Naive thymus-derived CD4-positive, alpha-beta T cell (primary cell): ENCODE measurements at regions of chr10 and their contacts with region 1.

Region 1: GRCh38 chr10:61992671-61993668 is 91.5 kb downstream of the ARID5B start:
- DNase-seq: peak in 8 of 9 donors; percentile 39 to 85 (median 72)
- ATAC-seq: peak; percentile 90
- H3K4me3 ChIP-seq: peak overlapping the region; percentile 28
- H3K4me3 Mint-ChIP-seq: peak overlapping the region in 9 of 10 donors; percentile 61 to 89 (median 64)
- H3K27ac ChIP-seq: peak overlapping the region; percentile 63
- H3K27ac Mint-ChIP-seq: peak overlapping the region; percentile 82 to 96 (median 93)
- H3K4me1 ChIP-seq: peaks cover 33 to 37% of the 10 kb centered on the region in 2 donors
- H3K4me1 Mint-ChIP-seq: peaks cover 28 to 81% (median 70%) of the 10 kb centered on the region in 7 donors
- H3K27me3 ChIP-seq: no peaks in the 10 kb centered on the region
- H3K27me3 Mint-ChIP-seq: no peaks in the 10 kb centered on the region

Region 2: GRCh38 chr10:60728056-60728455 is 1264.9 kb before region 1 on chr10:
- CTCF ChIA-PET with region 1: no interaction called
- POLR2A ChIA-PET with region 1: no interaction called
- intact Hi-C with region 1: loop called in 1 of 2 experiments (anchors 1 kb)
- DNase-seq: peak in 7 of 9 donors; percentile 51 to 85 (median 78)
- ATAC-seq: peak; percentile 73
- H3K4me3 ChIP-seq: peak overlapping the region; percentile 57
- H3K4me3 Mint-ChIP-seq: peak overlapping the region; percentile 74 to 94 (median 83)
- H3K27ac ChIP-seq: peak overlapping the region; percentile 89
- H3K27ac Mint-ChIP-seq: peak overlapping the region; percentile 84 to 98 (median 94)
- H3K4me1 ChIP-seq: peaks cover 28 to 64% of the 10 kb centered on the region in 2 donors
- H3K4me1 Mint-ChIP-seq: peaks cover 35 to 86% (median 77%) of the 10 kb centered on the region in 7 donors
- H3K27me3 ChIP-seq: no peaks in the 10 kb centered on the region
- H3K27me3 Mint-ChIP-seq: peaks cover 0 to 7% (median 0%) of the 10 kb centered on the region in 5 donors

Region 3: DNA sequence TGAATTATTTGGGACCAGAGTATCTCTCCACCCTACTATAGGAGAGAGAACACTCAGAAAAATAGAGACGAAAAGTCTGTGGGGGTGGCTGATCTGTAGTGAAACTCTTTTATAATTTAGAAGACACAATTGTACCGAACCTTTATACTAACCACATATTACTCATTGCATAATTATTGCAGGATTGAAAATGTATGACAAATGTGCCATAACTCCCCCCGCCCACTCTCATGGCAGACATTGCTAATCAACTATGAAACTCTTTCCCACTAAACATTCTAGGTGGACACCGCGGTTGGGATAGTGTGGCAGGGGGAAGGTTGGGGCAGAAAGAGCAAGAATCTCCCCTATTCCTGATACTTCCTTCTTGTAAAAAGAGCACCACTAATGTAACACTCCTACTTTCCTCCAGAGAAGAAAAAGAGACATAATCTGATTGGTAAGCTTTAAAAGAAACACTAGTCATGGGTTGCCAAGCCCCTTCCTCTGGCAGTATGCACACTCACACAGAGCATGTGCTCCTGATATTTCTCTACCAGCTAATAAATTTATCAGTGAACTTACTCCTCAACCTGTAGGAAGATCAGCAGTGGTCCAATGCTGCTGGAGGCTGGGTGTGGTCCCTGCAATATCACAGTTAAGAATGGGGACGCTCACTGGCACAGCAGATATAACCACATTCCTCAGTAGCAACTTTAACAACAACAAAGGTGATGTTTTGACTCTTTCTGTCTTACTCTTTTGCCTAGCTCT is 110.2 kb before region 1 on chr10:
- CTCF ChIA-PET with region 1: no interaction called
- POLR2A ChIA-PET with region 1: no interaction called
- intact Hi-C with region 1: no loop called
- DNase-seq: peak in 1 of 9 donors; percentile 66
- ATAC-seq: no peak
- H3K4me3 ChIP-seq: no peak overlapping the region
- H3K4me3 Mint-ChIP-seq: no peak overlapping the region
- H3K27ac ChIP-seq: no peak overlapping the region
- H3K27ac Mint-ChIP-seq: no peak overlapping the region
- H3K4me1 ChIP-seq: no peaks in the 10 kb centered on the region
- H3K4me1 Mint-ChIP-seq: peaks cover 0 to 10% (median 0%) of the 10 kb centered on the region in 7 donors
- H3K27me3 ChIP-seq: no peaks in the 10 kb centered on the region
- H3K27me3 Mint-ChIP-seq: peaks cover 0 to 3% (median 0%) of the 10 kb centered on the region in 5 donors

Region 4: GRCh38 chr10:61961278-61961677 is 31.7 kb before region 1 on chr10:
- CTCF ChIA-PET with region 1: no interaction called
- POLR2A ChIA-PET with region 1: no interaction called
- intact Hi-C with region 1: loop called in 1 of 2 experiments (anchors 1 kb)
- DNase-seq: peak in 2 of 9 donors; percentile 25 to 28
- ATAC-seq: peak; percentile 77
- H3K4me3 ChIP-seq: no peak overlapping the region
- H3K4me3 Mint-ChIP-seq: peak overlapping the region in 1 of 10 donors; percentile 65
- H3K27ac ChIP-seq: no peak overlapping the region
- H3K27ac Mint-ChIP-seq: peak overlapping the region in 4 of 9 donors; percentile 24 to 84 (median 71)
- H3K4me1 ChIP-seq: peaks cover 0 to 42% of the 10 kb centered on the region in 2 donors
- H3K4me1 Mint-ChIP-seq: peaks cover 18 to 79% (median 44%) of the 10 kb centered on the region in 7 donors
- H3K27me3 ChIP-seq: no peaks in the 10 kb centered on the region
- H3K27me3 Mint-ChIP-seq: no peaks in the 10 kb centered on the region

Region 5: GRCh38 chr10:62050893-62051433 is 58.0 kb after region 1 on chr10:
- CTCF ChIA-PET with region 1: no interaction called
- POLR2A ChIA-PET with region 1: interaction called, 4 read pairs
- intact Hi-C with region 1: loop called in 1 of 2 experiments (anchors 1 kb)
- DNase-seq: peak; percentile 25 to 88 (median 78)
- ATAC-seq: peak; percentile 86
- H3K4me3 ChIP-seq: peak overlapping the region; percentile 62
- H3K4me3 Mint-ChIP-seq: peak overlapping the region; percentile 81 to 94 (median 88)
- H3K27ac ChIP-seq: peak overlapping the region; percentile 77
- H3K27ac Mint-ChIP-seq: peak overlapping the region; percentile 91 to 100 (median 96)
- H3K4me1 ChIP-seq: peaks cover 59 to 63% of the 10 kb centered on the region in 2 donors
- H3K4me1 Mint-ChIP-seq: peaks cover 60 to 99% (median 96%) of the 10 kb centered on the region in 7 donors
- H3K27me3 ChIP-seq: no peaks in the 10 kb centered on the region
- H3K27me3 Mint-ChIP-seq: no peaks in the 10 kb centered on the region

Region 6: DNA sequence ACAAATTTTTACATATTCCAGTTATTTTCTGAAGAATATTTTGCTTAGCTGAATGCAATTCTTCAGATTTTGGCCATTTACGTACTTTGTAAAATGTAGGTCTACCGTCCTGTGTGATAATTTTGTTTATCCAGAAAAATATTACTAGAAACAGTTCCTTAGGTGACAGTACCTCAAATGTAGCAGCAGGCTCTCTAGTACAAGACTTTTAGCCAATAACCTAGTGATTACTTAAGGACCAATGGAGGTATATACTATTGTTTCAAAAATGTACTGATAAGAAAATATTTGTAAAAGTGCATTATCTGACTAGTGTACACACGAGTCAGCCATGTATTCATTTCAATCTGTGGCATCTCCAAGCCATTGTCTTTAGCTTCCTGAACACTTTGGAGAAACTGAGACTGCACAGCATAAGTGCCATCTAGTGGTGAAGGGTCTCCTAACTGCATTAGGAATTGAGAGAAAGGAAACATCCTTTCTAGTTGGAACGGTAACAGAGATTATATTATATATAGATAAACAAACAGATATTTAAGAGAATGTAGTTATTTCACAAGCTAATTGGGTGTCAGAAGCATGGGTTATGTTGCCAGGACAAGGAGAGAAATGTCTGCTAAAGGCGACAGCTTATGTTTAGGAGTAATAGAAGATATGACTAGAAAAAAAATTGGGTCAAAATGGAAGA is 252.0 kb after region 1 on chr10:
- CTCF ChIA-PET with region 1: interaction called, 8 read pairs
- POLR2A ChIA-PET with region 1: no interaction called
- intact Hi-C with region 1: loop called in 1 of 2 experiments (anchors 2 kb)
- DNase-seq: peak in 8 of 9 donors; percentile 35 to 80 (median 68)
- ATAC-seq: peak; percentile 94
- H3K4me3 ChIP-seq: no peak overlapping the region
- H3K4me3 Mint-ChIP-seq: peak overlapping the region in 6 of 10 donors; percentile 16 to 64 (median 42)
- H3K27ac ChIP-seq: no peak overlapping the region
- H3K27ac Mint-ChIP-seq: peak overlapping the region in 8 of 9 donors; percentile 6 to 85 (median 53)
- H3K4me1 ChIP-seq: peaks cover 6 to 9% of the 10 kb centered on the region in 2 donors
- H3K4me1 Mint-ChIP-seq: peaks cover 9 to 37% (median 30%) of the 10 kb centered on the region in 7 donors
- H3K27me3 ChIP-seq: no peaks in the 10 kb centered on the region
- H3K27me3 Mint-ChIP-seq: no peaks in the 10 kb centered on the region

Region 7: DNA sequence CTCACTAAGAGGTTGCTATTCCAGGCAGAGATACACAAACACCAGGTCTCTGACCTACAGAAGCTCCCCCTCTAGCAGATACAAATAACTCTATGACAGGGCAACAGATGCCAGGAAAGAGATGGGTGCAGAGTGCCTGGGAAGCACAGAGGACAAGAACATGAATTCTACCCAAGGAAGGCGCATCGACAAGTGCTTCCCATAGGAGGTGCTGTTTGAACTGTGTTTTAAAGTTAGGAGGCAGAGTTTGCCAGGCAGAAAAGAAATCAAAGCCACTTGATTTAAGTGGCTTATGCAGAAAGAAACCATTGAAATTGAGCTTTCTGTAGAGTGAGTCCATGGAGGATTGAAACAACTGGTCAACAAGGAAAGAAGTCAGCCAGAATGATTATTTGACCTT is 858.5 kb after region 1 on chr10:
- CTCF ChIA-PET with region 1: no interaction called
- POLR2A ChIA-PET with region 1: no interaction called
- intact Hi-C with region 1: no loop called
- DNase-seq: no peak
- ATAC-seq: no peak
- H3K4me3 ChIP-seq: no peak overlapping the region
- H3K4me3 Mint-ChIP-seq: no peak overlapping the region
- H3K27ac ChIP-seq: no peak overlapping the region
- H3K27ac Mint-ChIP-seq: no peak overlapping the region
- H3K4me1 ChIP-seq: peaks cover 0 to 39% of the 10 kb centered on the region in 2 donors
- H3K4me1 Mint-ChIP-seq: peaks cover 10 to 54% (median 14%) of the 10 kb centered on the region in 7 donors
- H3K27me3 ChIP-seq: no peaks in the 10 kb centered on the region
- H3K27me3 Mint-ChIP-seq: peaks cover 0 to 18% (median 13%) of the 10 kb centered on the region in 5 donors